Endothelial cell of umbilical vein (primary cell): ENCODE measurements at regions of chr12 and their contacts with region 1.

Region 1: GRCh38 chr12:14417715-14418114 is 52.2 kb downstream of the ATF7IP start:
- DNase-seq: peak; percentile 96
- H3K4me3 ChIP-seq: no peak overlapping the region
- H3K27ac ChIP-seq: peak overlapping the region; percentile 54
- H3K4me1 ChIP-seq: peaks cover 45% of the 10 kb centered on the region
- H3K27me3 ChIP-seq: no peaks in the 10 kb centered on the region
- CTCF ChIP-seq: no peak
- POLR2A ChIP-seq: no peak

Region 2: DNA sequence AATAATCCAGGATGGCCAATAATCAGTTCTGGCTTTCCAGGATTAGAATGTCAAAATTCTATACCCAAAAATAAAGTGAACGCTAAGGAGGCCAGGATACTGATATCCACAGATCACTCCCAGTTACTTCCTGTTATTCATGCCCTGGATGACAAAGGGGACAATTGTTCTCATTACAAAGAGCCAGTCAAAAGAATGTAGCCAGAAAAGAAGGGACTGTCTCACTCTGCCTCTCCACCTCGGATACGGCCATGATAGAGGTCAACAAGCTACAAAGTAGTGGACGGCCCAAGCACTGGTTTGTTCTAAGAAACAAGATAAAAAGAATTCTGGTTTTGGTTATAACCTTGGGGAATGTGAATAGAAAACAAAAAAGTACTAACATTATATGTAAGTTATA is 168.3 kb before region 1 on chr12:
- CTCF ChIA-PET with region 1: interaction called, 6 read pairs
- POLR2A ChIA-PET with region 1: no interaction called
- dilution Hi-C with region 1: no loop called
- intact Hi-C with region 1: loop called (anchors 2 kb)
- DNase-seq: no peak
- H3K4me3 ChIP-seq: no peak overlapping the region
- H3K27ac ChIP-seq: no peak overlapping the region
- H3K4me1 ChIP-seq: peaks cover 36% of the 10 kb centered on the region
- H3K27me3 ChIP-seq: no peaks in the 10 kb centered on the region
- CTCF ChIP-seq: no peak
- POLR2A ChIP-seq: no peak

Region 3: GRCh38 chr12:14365294-14366208 is 52.2 kb before region 1 on chr12 and contains the start of gene ATF7IP:
- CTCF ChIA-PET with region 1: interaction called, 63 read pairs
- POLR2A ChIA-PET with region 1: interaction called, 11 read pairs
- dilution Hi-C with region 1: no loop called
- intact Hi-C with region 1: loop called (anchors 1 kb)
- DNase-seq: peak; percentile 97
- H3K4me3 ChIP-seq: peak within 1 kb of the TSS; percentile 53 to 98 (median 98)
- H3K27ac ChIP-seq: peak within 1 kb of the TSS; percentile 89
- H3K4me1 ChIP-seq: peaks cover 17% of the 10 kb centered on the region
- H3K27me3 ChIP-seq: no peaks in the 10 kb centered on the region
- CTCF ChIP-seq: no peak
- POLR2A ChIP-seq: peak; percentile 81
- total RNA-seq, gene ATF7IP: 72.4 and 73.5 TPM in 2 replicates

Region 4: GRCh38 chr12:14384783-14385638 is 32.7 kb before region 1 on chr12:
- CTCF ChIA-PET with region 1: interaction called, 26 read pairs
- POLR2A ChIA-PET with region 1: interaction called, 5 read pairs
- dilution Hi-C with region 1: no loop called
- intact Hi-C with region 1: loop called (anchors 2 kb)
- DNase-seq: peak; percentile 94
- H3K4me3 ChIP-seq: peak overlapping the region in 1 of 3 experiments; percentile 16
- H3K27ac ChIP-seq: peak overlapping the region; percentile 58
- H3K4me1 ChIP-seq: peaks cover 20% of the 10 kb centered on the region
- H3K27me3 ChIP-seq: no peaks in the 10 kb centered on the region
- CTCF ChIP-seq: no peak
- POLR2A ChIP-seq: no peak

Region 5: GRCh38 chr12:14454098-14454907 is 36.6 kb after region 1 on chr12:
- CTCF ChIA-PET with region 1: interaction called, 10 read pairs
- POLR2A ChIA-PET with region 1: no interaction called
- dilution Hi-C with region 1: no loop called
- intact Hi-C with region 1: no loop called
- DNase-seq: peak; percentile 33
- H3K4me3 ChIP-seq: no peak overlapping the region
- H3K27ac ChIP-seq: no peak overlapping the region
- H3K4me1 ChIP-seq: no peaks in the 10 kb centered on the region
- H3K27me3 ChIP-seq: no peaks in the 10 kb centered on the region
- CTCF ChIP-seq: peak; percentile 59 to 63
- POLR2A ChIP-seq: no peak